CD14-positive monocyte (primary cell): ENCODE measurements at regions of chr10 and their contacts with region 1.

Region 1: DNA sequence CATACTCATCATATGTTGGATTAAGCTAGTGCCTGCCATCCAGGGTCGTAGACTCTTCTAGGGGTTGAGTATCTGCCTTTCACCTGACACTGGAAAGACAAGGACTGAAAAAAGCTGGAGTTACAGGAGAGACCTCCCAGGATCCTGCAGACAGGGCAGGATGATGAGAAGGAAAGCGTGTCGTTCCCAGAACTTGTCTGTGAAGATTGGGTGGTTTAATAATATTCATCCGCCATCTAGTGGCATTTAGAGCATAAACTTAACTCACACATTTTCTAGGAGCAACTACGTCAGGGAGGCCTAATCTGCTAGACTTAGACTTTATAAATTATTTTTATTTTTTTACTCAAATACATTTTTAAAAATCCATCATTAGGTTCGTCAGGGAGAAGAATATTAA is 59.6 kb downstream of the ADRB1 start:
- DNase-seq: peak in 2 of 3 donors; percentile 42 to 53
- H3K4me3 ChIP-seq: no peak overlapping the region
- H3K4me3 Mint-ChIP-seq: no peak overlapping the region
- H3K27ac ChIP-seq: no peak overlapping the region
- H3K27ac Mint-ChIP-seq: no peak overlapping the region
- H3K4me1 ChIP-seq: peaks cover 33 to 48% of the 10 kb centered on the region in 2 donors
- H3K4me1 Mint-ChIP-seq: peaks cover 45% of the 10 kb centered on the region
- H3K27me3 ChIP-seq: peaks cover 6 to 17% of the 10 kb centered on the region in 2 donors
- H3K27me3 Mint-ChIP-seq: peaks cover 20 to 24% (median 21%) of the 10 kb centered on the region in 3 donors
- CTCF ChIP-seq: peak; percentile 69

Region 2: DNA sequence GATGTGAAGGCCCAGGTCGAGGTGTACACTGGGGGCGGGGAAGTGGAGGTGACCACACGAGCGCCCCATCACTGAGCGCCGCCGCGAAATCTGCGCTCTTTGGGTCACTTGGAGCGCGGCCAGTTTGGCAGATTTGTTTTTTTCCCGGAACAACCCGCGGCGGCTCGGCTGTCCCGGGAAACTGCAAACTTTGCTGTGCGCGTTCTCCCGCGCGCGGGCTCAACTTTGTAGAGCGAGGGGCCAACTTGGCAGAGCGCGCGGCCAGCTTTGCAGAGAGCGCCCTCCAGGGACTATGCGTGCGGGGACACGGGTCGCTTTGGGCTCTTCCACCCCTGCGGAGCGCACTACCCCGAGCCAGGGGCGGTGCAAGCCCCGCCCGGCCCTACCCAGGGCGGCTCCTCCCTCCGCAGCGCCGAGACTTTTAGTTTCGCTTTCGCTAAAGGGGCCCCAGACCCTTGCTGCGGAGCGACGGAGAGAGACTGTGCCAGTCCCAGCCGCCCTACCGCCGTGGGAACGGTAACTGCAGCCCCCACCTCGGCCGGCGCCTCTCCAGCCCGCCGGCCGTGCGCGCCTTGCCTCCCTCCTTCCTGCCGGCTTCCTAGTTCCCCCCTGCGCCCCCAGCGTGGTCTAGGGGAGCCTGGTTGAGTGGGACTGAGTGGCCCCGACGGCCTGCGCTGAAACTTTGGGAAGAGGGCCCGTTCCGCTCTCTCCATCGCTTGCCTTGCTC is 423.7 kb before region 1 on chr10 and contains the start of gene CASP7:
- intact Hi-C with region 1: loop called in 1 of 2 experiments (anchors 5 kb)
- DNase-seq: peak; percentile 43 to 65 (median 64)
- H3K4me3 ChIP-seq: peak within 1 kb of the TSS; percentile 71 to 98 (median 95)
- H3K4me3 Mint-ChIP-seq: peak within 1 kb of the TSS; percentile 98 to 99
- H3K27ac ChIP-seq: peak within 1 kb of the TSS; percentile 72 to 73
- H3K27ac Mint-ChIP-seq: peak within 1 kb of the TSS; percentile 86 to 96 (median 91)
- H3K4me1 ChIP-seq: peaks cover 29 to 38% of the 10 kb centered on the region in 2 donors
- H3K4me1 Mint-ChIP-seq: peaks cover 37% of the 10 kb centered on the region
- H3K27me3 ChIP-seq: no peaks in the 10 kb centered on the region
- H3K27me3 Mint-ChIP-seq: no peaks in the 10 kb centered on the region
- CTCF ChIP-seq: peak; percentile 52
- polyA plus RNA-seq, gene CASP7: 9.9 to 26.1 (median 16.0) TPM

Region 3: GRCh38 chr10:113802997-113803396 is 300.3 kb before region 1 on chr10:
- intact Hi-C with region 1: loop called (anchors 5 kb)
- DNase-seq: peak; percentile 9 to 25 (median 21)
- H3K4me3 ChIP-seq: no peak overlapping the region
- H3K4me3 Mint-ChIP-seq: no peak overlapping the region
- H3K27ac ChIP-seq: no peak overlapping the region
- H3K27ac Mint-ChIP-seq: no peak overlapping the region
- H3K4me1 ChIP-seq: no peaks in the 10 kb centered on the region
- H3K4me1 Mint-ChIP-seq: peaks cover 10% of the 10 kb centered on the region
- H3K27me3 ChIP-seq: no peaks in the 10 kb centered on the region
- H3K27me3 Mint-ChIP-seq: peaks cover 0 to 3% (median 2%) of the 10 kb centered on the region in 3 donors
- CTCF ChIP-seq: no peak